Aorta (tissue), 5 donors: ENCODE measurements at regions of chr1 and their contacts with region 1.

Region 1: DNA sequence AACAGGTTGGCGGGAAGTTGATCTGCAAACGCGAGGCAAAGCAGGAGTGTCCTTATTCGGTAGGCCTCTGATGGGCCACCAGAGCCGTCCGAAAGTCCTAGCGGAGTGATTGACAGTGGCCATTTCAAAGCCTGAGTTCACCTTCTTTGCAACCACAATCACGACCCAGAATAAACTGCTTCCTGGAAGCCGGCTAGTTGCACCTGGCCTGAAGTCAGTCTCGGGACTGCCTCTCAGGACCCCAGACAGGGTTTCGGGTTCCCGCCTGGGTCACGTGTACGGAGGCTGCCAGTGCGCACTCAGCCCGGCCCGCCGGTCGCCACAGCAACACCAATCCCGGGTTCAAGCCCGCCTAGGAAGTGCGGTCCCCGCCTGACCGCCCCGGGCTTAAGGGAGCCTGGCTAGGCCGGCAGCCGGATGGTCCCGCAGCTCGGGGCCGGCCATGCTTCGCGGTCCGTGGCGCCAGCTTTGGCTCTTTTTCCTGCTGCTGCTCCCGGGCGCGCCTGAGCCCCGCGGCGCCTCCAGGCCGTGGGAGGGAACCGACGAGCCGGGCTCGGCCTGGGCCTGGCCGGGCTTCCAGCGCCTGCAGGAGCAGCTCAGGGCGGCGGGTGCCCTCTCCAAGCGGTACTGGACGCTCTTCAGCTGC is at the start of gene TOR3A:
- DNase-seq: peak; percentile 96
- ATAC-seq: peak; percentile 97
- H3K4me3 ChIP-seq: peak within 1 kb of the TSS; percentile 44 to 80
- H3K27ac ChIP-seq: peak within 1 kb of the TSS in 1 of 2 donors; percentile 92
- H3K4me1 ChIP-seq: peaks cover 0 to 3% of the 10 kb centered on the region in 2 donors
- H3K27me3 ChIP-seq: no peaks in the 10 kb centered on the region
- total RNA-seq, gene TOR3A: 13.9 to 18.5 TPM

Region 2: GRCh38 chr1:179025125-179025974 is 56.5 kb before region 1 on chr1 and contains the start of gene FAM20B:
- intact Hi-C with region 1: loop called in 1 of 2 experiments (anchors 2 kb)
- DNase-seq: peak; percentile 96 to 99
- ATAC-seq: peak; percentile 98
- H3K4me3 ChIP-seq: peak within 1 kb of the TSS; percentile 82 to 90
- H3K27ac ChIP-seq: peak within 1 kb of the TSS; percentile 57 to 74
- H3K4me1 ChIP-seq: peaks cover 0 to 9% of the 10 kb centered on the region in 2 donors
- H3K27me3 ChIP-seq: no peaks in the 10 kb centered on the region
- total RNA-seq, gene FAM20B: 55.6 to 75.5 TPM

Region 3: DNA sequence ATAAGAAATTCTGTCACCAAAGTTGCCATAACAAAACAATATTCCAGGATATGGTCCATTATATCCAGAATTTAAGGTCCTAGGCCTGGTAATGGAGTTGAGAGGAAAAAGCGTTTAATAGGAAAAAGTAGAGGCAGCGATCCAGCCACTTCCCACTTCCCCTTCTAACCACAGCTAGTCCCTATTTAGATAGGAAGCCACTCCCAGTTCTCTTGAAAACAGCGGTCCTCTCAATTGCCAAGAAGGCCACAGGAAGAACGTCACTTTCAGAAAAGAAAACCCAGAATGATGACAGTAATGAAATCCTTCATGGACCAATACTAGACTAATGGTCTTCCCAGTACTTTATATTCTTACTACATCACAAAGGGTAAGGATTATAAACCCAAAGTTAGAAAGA is 109.1 kb after region 1 on chr1:
- intact Hi-C with region 1: loop called in 1 of 2 experiments (anchors 5 kb)
- DNase-seq: no peak
- ATAC-seq: peak; percentile 72
- H3K4me3 ChIP-seq: no peak overlapping the region
- H3K27ac ChIP-seq: no peak overlapping the region
- H3K4me1 ChIP-seq: no peaks in the 10 kb centered on the region
- H3K27me3 ChIP-seq: no peaks in the 10 kb centered on the region

Region 4: GRCh38 chr1:179229214-179230140 is 147.7 kb after region 1 on chr1 and contains the start of gene ABL2:
- intact Hi-C with region 1: no loop called
- DNase-seq: peak; percentile 62 to 79
- ATAC-seq: peak; percentile 78
- H3K4me3 ChIP-seq: peak within 1 kb of the TSS; percentile 66 to 87
- H3K27ac ChIP-seq: peak within 1 kb of the TSS in 1 of 2 donors; percentile 72
- H3K4me1 ChIP-seq: peaks cover 0 to 2% of the 10 kb centered on the region in 2 donors
- H3K27me3 ChIP-seq: no peaks in the 10 kb centered on the region
- total RNA-seq, gene ABL2: 57.0 to 58.5 TPM

Region 5: DNA sequence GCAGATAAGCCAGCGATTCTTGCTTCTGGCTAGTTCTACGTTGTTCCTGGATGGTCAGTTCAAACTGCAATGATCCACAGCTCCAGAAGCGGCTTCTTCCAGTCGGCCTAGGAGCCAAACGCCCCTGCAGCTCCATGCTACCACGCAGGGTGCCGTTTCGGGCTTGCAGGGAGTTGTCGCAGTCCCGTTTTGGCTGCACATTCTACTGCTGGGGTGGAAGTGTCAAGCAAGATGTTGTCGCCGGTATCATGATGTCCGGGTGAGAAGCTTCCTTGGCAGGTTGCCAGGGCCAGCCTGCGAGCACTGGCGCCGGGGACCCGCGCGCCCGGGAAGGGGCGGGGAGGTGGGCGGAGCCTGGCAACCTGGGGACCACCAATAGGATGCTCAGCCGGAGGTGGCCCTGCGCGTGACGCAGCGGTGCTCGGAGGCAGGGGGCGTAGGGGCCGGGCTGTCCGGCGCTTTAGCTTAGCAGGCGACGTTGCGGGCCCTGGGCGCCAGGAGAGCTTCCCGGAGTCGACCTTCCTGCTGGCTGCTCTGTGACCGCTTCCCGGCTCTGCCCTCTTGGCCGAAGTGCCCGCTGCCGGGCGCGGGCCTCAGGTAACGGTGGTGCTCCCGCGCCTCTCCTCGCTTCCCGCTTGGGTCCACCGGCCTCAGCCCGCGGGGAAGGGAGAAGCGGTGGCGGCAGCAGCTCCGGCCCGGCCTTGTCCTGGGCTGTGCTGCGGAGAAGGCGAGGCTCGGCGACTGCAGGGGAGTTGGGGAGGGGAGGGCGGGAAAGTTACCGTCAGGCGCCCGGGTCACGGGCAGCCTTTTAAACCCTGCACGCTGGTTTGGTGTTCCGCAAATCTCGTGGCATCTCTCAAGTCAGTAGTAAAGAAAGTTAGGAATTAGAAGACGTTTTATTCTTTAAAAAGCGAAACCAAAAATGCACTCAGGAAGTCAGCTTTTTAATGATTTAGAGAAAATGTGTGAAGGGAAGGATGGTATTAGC is 211.8 kb after region 1 on chr1 and contains the start of gene SOAT1:
- intact Hi-C with region 1: loop called (anchors 2 to 5 kb)
- DNase-seq: peak; percentile 97 to 98
- ATAC-seq: peak; percentile 98
- H3K4me3 ChIP-seq: peak within 1 kb of the TSS; percentile 63 to 75
- H3K27ac ChIP-seq: peak within 1 kb of the TSS; percentile 2 to 87
- H3K4me1 ChIP-seq: peaks cover 2 to 3% of the 10 kb centered on the region in 2 donors
- H3K27me3 ChIP-seq: no peaks in the 10 kb centered on the region
- total RNA-seq, gene SOAT1: 38.6 to 42.7 TPM